OCI-LY7 (cell line): ENCODE measurements at regions of chr19 and their contacts with region 1.

Region 1: DNA sequence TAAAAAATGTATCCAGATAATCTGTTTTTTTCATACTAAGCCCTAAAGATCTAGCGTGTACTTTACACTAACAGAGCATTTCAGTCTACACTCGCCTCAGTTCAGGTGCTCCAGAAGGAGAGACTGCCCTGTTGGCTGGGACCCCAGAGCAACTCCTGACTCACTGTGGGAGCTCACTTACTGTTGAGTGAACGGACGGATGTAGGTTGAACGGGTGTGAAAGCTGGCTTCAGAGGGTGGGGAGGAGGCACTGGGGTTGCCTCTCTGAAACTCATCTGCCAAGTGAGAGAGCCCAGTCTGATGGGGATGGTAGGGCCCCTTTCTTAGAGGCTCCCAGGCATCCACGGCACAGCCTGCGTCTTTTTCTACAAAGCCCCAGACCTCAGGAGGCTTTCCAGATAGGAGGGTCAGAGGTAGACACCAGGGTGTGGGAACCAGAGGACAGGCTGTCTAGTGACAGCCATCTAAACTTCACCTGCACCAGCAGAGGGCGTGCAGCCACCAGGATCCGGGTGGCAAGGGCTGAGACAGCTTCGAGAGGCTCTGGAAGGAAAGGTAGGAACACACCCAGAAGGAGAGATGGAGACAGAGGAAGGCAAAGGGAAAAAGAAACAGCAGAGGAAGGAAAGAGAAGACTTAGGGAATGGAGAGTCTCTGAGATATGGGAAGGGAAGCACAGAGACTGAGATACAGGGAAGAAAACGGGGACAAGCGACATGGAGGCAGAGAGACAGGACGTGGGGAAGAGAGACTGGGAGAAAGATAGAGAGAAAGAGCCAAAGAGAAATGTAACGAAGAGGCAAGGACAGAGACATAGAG is 3.7 kb downstream of the KASH5 start:
- DNase-seq: peak; percentile 90
- H3K4me3 ChIP-seq: peak overlapping the region; percentile 11
- H3K27ac ChIP-seq: peak overlapping the region; percentile 92
- H3K4me1 ChIP-seq: peaks cover 86% of the 10 kb centered on the region
- CTCF ChIP-seq: peak; percentile 99

Region 2: GRCh38 chr19:49272184-49272583 is 119.6 kb before region 1 on chr19:
- CTCF ChIA-PET with region 1: no interaction called
- POLR2A ChIA-PET with region 1: no interaction called
- intact Hi-C with region 1: loop called (anchors 2 kb)
- DNase-seq: no peak
- H3K4me3 ChIP-seq: no peak overlapping the region
- H3K27ac ChIP-seq: no peak overlapping the region
- H3K4me1 ChIP-seq: no peaks in the 10 kb centered on the region
- CTCF ChIP-seq: no peak

Region 3: GRCh38 chr19:49340069-49340864 is 51.5 kb before region 1 on chr19:
- CTCF ChIA-PET with region 1: no interaction called
- POLR2A ChIA-PET with region 1: interaction called, 4 read pairs
- intact Hi-C with region 1: loop called (anchors 2 kb)
- DNase-seq: peak; percentile 99
- H3K4me3 ChIP-seq: peak overlapping the region; percentile 76
- H3K27ac ChIP-seq: peak overlapping the region; percentile 98
- H3K4me1 ChIP-seq: peaks cover 52% of the 10 kb centered on the region
- CTCF ChIP-seq: peak; percentile 21; the same call in 1 of the 2 replicates

Region 4: DNA sequence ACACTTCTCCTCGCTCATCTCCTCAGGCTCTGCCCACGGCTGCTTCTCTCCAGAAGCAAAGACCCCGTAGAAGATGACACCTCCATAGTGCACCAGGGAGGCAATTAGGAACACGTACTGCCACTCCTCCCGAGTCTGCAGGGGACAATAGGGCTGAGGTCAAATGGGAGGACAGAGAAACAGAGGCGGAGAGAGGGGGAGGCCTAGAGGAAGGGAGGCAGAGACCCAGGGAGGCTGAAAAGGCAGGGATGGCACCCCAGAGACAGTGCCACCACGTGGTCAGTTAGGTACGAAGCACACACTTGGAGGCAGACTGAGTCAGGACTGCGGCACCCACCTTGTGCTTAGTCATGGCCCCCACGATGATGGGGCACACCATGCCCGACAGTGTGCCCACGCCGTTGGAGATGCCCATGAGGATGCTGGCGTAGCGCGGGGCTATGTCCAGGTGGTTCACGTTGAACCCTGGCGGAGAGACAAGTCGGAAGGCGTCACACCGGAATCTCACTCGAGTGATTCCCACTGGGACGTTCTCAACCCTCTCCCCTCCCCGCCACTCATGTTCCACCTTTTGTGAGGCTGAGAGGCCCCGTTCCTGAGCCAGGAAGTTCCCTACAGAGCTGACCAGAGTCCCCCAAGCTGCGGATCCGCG is 39.0 kb after region 1 on chr19:
- CTCF ChIA-PET with region 1: interaction called, 5 read pairs
- POLR2A ChIA-PET with region 1: no interaction called
- intact Hi-C with region 1: loop called (anchors 1 kb)
- DNase-seq: peak; percentile 79
- H3K4me3 ChIP-seq: no peak overlapping the region
- H3K27ac ChIP-seq: no peak overlapping the region
- H3K4me1 ChIP-seq: peaks cover 41% of the 10 kb centered on the region
- CTCF ChIP-seq: peak; percentile 75

Region 5: DNA sequence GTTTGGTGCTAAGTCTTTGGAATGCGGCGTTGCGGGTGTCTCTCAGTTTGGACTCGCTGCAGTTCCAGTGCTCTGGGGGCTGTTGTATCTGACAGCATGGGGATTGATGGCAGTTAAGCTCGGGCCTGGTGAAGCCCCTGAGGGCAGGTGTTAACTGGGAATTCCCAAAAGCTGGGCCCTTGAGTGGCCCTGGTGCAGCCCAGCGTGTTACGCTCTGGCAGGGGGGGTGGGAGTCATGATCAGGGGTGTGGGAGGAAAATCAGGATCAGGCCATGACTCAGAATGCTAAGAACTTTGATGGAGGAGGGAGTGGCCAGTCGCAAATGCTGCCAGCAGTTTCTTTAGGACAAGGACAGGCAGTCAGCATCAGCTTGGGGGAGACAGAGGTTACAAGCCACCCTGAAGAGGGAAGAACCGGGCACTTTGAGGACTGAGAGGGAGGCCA is 394.6 kb after region 1 on chr19:
- CTCF ChIA-PET with region 1: no interaction called
- POLR2A ChIA-PET with region 1: no interaction called
- intact Hi-C with region 1: no loop called
- DNase-seq: no peak
- H3K4me3 ChIP-seq: no peak overlapping the region
- H3K27ac ChIP-seq: no peak overlapping the region
- H3K4me1 ChIP-seq: no peaks in the 10 kb centered on the region
- CTCF ChIP-seq: no peak